B cell (primary cell): ENCODE measurements at regions of chr7 and their contacts with region 1.

Region 1: GRCh38 chr7:27586825-27587224 is 75.9 kb downstream of the HIBADH start:
- DNase-seq: peak; percentile 56
- ATAC-seq: peak; percentile 86
- H3K4me3 ChIP-seq: no peak overlapping the region
- H3K4me3 Mint-ChIP-seq: peak overlapping the region; percentile 65
- H3K27ac ChIP-seq: no peak overlapping the region
- H3K27ac Mint-ChIP-seq: no peak overlapping the region
- H3K4me1 ChIP-seq: peaks cover 12 to 15% of the 10 kb centered on the region in 2 donors
- H3K4me1 Mint-ChIP-seq: peaks cover 20% of the 10 kb centered on the region
- H3K27me3 ChIP-seq: peaks cover 0 to 3% (median 1%) of the 10 kb centered on the region in 4 experiments
- H3K27me3 Mint-ChIP-seq: peaks cover 18% of the 10 kb centered on the region
- CTCF ChIP-seq: no peak

Region 2: GRCh38 chr7:27399791-27400567 is 186.8 kb before region 1 on chr7:
- CTCF ChIA-PET with region 1: no interaction called
- POLR2A ChIA-PET with region 1: no interaction called
- intact Hi-C with region 1: no loop called
- DNase-seq: no peak
- ATAC-seq: no peak
- H3K4me3 ChIP-seq: no peak overlapping the region
- H3K4me3 Mint-ChIP-seq: no peak overlapping the region
- H3K27ac ChIP-seq: no peak overlapping the region
- H3K27ac Mint-ChIP-seq: no peak overlapping the region
- H3K4me1 ChIP-seq: peaks cover 0 to 3% of the 10 kb centered on the region in 2 donors
- H3K4me1 Mint-ChIP-seq: peaks cover 8% of the 10 kb centered on the region
- H3K27me3 ChIP-seq: no peaks in the 10 kb centered on the region
- H3K27me3 Mint-ChIP-seq: peaks cover 9% of the 10 kb centered on the region
- CTCF ChIP-seq: no peak

Region 3: GRCh38 chr7:27576360-27576944 is 10.4 kb before region 1 on chr7:
- CTCF ChIA-PET with region 1: interaction called, 12 read pairs
- POLR2A ChIA-PET with region 1: no interaction called
- intact Hi-C with region 1: no loop called
- DNase-seq: peak; percentile 46
- ATAC-seq: no peak
- H3K4me3 ChIP-seq: no peak overlapping the region
- H3K4me3 Mint-ChIP-seq: no peak overlapping the region
- H3K27ac ChIP-seq: no peak overlapping the region
- H3K27ac Mint-ChIP-seq: no peak overlapping the region
- H3K4me1 ChIP-seq: no peaks in the 10 kb centered on the region
- H3K4me1 Mint-ChIP-seq: no peaks in the 10 kb centered on the region
- H3K27me3 ChIP-seq: no peaks in the 10 kb centered on the region
- H3K27me3 Mint-ChIP-seq: no peaks in the 10 kb centered on the region
- CTCF ChIP-seq: peak; percentile 73